ENCODE measurements at regions of chr4 and their contacts with region 1.

Region 1: GRCh38 chr4:68375667-68376559 is 26.0 kb upstream of the YTHDC1 start:
- DNase-seq: peak; percentile 16
- H3K4me3 ChIP-seq: no peak overlapping the region; the same call in none of the 2 replicates
- CTCF ChIP-seq: peak; percentile 85

Region 2: DNA sequence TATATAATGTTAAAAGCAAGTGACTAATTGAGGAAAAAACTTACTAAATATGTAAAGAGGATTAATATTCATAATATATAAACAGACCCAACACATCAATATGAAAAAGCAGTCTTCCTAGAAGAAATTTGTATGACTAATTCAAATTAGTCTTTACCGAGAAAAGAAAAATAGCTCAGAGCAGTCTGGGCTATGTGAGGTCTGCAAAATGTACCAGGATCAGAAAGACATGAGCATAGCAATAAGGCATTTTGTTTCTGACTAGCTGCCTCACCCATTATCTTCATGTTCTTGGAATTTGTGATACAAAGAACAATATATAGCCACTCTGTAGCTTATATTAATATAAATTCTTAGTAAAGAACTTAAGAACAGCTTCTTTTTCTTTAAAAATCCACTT is 116.7 kb before region 1 on chr4:
- CTCF ChIA-PET with region 1: interaction called, 13 read pairs
- POLR2A ChIA-PET with region 1: no interaction called
- DNase-seq: no peak
- H3K4me3 ChIP-seq: no peak overlapping the region
- CTCF ChIP-seq: no peak

Region 3: GRCh38 chr4:68304731-68305130 is 71.2 kb before region 1 on chr4:
- CTCF ChIA-PET with region 1: interaction called, 10 read pairs
- POLR2A ChIA-PET with region 1: no interaction called
- DNase-seq: no peak
- H3K4me3 ChIP-seq: no peak overlapping the region
- CTCF ChIP-seq: no peak

Region 4: GRCh38 chr4:68338608-68339007 is 37.3 kb before region 1 on chr4:
- CTCF ChIA-PET with region 1: interaction called, 15 read pairs
- POLR2A ChIA-PET with region 1: no interaction called
- DNase-seq: no peak
- H3K4me3 ChIP-seq: no peak overlapping the region
- CTCF ChIP-seq: no peak

Region 5: GRCh38 chr4:68349649-68350360 is 26.1 kb before region 1 on chr4 and contains the start of gene YTHDC1:
- CTCF ChIA-PET with region 1: interaction called, 18 read pairs
- POLR2A ChIA-PET with region 1: no interaction called
- DNase-seq: peak; percentile 67
- H3K4me3 ChIP-seq: peak within 1 kb of the TSS; percentile 87
- CTCF ChIP-seq: no peak

Region 6: GRCh38 chr4:68390205-68390935 is 14.5 kb after region 1 on chr4:
- CTCF ChIA-PET with region 1: interaction called, 19 read pairs
- POLR2A ChIA-PET with region 1: no interaction called
- DNase-seq: no peak
- H3K4me3 ChIP-seq: no peak overlapping the region
- CTCF ChIP-seq: no peak

Region 7: DNA sequence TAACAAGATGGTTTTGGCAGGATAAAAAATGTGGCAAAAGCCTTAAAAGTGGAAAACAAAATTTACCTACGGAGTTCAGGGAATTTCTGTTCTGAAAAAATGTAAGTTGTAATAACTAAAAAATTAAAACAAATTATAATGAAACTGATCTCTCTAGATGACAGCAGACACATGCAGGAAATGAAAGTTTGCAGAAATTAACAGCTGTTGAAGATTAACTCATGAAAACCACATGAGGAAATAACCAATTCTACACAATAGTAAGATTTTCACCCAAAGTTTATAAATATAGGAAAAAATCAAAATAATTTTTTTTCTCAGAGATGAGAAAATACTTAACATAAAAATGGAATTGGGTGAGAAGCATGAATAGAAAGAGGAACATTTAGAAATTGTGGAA is 342.1 kb after region 1 on chr4:
- CTCF ChIA-PET with region 1: no interaction called
- POLR2A ChIA-PET with region 1: no interaction called
- DNase-seq: no peak
- H3K4me3 ChIP-seq: no peak overlapping the region
- CTCF ChIP-seq: no peak

Measured in AG04449 (cell line).